HCT116 (cell line): ENCODE measurements at regions of chr17 and their contacts with region 1.

Region 1: GRCh38 chr17:61495145-61495857 is 43.1 kb downstream of the TBX4 start:
- DNase-seq: peak; percentile 93
- ATAC-seq: peak; percentile 90
- H3K4me3 ChIP-seq: peak overlapping the region; percentile 47 to 59
- H3K27ac ChIP-seq: peak overlapping the region; percentile 92
- H3K4me1 ChIP-seq: peaks cover 72 to 74% of the 10 kb centered on the region in 2 experiments
- H3K27me3 ChIP-seq: no peaks in the 10 kb centered on the region
- CTCF ChIP-seq: no peak
- POLR2A ChIP-seq: peak; percentile 76
- RAD21 ChIP-seq: no peak; the same call in 1 of the 2 replicates

Region 2: DNA sequence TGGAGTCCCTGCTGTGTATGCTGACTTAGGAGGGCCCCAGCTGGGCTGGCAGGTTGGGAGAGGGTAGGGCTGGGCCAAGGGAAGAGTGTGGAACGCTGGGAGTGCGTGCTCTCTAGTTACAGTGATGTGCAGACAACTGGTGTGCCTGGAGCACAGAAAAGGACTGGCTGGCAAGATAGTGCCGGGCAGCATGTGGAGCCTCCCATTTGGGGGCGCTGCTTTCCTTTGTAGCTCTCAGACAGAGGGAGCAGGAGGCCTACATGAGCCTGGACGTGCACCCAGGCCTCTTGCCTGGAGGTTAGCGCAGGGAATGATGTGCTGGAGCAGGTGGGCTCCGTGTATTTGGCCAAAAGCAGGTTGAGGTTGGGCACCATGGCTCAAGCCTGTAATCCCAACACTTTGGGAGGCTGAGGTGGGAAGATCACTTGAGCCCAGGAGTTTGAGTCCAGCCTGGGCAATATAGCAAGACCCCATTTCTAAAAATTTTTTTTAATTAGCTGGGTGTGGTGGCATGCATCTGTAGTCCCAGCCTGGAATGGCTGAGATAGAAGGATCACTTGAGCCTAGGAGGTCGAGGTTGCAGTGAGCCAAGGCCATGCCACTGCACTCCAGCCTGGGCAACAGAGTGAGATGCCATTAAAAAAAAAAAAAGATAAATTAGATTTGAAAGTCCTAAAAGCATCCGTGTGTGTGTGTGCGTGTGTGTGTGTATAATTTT is 69.1 kb before region 1 on chr17:
- CTCF ChIA-PET with region 1: no interaction called
- POLR2A ChIA-PET with region 1: no interaction called
- RAD21 ChIA-PET with region 1: interaction called in 1 of 2 experiments, 3 read pairs
- intact Hi-C with region 1: loop called (anchors 2 kb)
- DNase-seq: peak; percentile 63
- ATAC-seq: peak; percentile 72
- H3K4me3 ChIP-seq: no peak overlapping the region
- H3K27ac ChIP-seq: peak overlapping the region; percentile 89
- H3K4me1 ChIP-seq: peaks cover 37 to 42% of the 10 kb centered on the region in 2 experiments
- H3K27me3 ChIP-seq: no peaks in the 10 kb centered on the region
- CTCF ChIP-seq: peak; percentile 58 to 86 (median 64)
- POLR2A ChIP-seq: no peak
- RAD21 ChIP-seq: peak; percentile 92

Region 3: GRCh38 chr17:61467416-61468259 is 27.7 kb before region 1 on chr17:
- CTCF ChIA-PET with region 1: interaction called, 3 read pairs
- POLR2A ChIA-PET with region 1: interaction called, 23 read pairs
- RAD21 ChIA-PET with region 1: no interaction called
- intact Hi-C with region 1: no loop called
- DNase-seq: peak; percentile 59
- ATAC-seq: peak; percentile 90
- H3K4me3 ChIP-seq: no peak overlapping the region
- H3K27ac ChIP-seq: peak overlapping the region; percentile 23; the same call in 1 of the 2 replicates
- H3K4me1 ChIP-seq: peaks cover 18 to 27% of the 10 kb centered on the region in 2 experiments
- H3K27me3 ChIP-seq: no peaks in the 10 kb centered on the region
- CTCF ChIP-seq: no peak
- POLR2A ChIP-seq: no peak
- RAD21 ChIP-seq: no peak

Region 4: DNA sequence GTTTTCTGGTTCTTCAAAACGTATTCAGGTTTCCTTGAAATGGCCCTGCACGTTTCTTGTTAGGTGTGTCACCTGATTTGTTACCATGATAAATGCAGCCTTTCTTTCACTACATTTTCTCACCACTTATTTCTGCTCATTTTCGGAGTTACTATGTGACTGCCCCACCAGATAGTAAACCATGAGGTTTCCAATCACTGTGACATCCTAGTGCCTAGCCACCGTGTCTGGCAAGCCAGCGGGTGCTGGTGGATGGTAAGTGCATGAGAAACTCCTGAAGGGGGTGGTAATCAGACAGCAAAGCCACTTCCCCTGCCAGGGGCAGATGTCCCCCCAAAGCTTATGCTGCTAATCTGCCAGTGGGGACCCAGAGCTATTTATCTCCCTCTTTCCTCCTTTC is 22.1 kb before region 1 on chr17:
- CTCF ChIA-PET with region 1: interaction called, 3 read pairs
- POLR2A ChIA-PET with region 1: interaction called, 23 read pairs
- RAD21 ChIA-PET with region 1: no interaction called
- intact Hi-C with region 1: no loop called
- DNase-seq: no peak
- ATAC-seq: no peak
- H3K4me3 ChIP-seq: no peak overlapping the region
- H3K27ac ChIP-seq: no peak overlapping the region
- H3K4me1 ChIP-seq: peaks cover 9 to 29% of the 10 kb centered on the region in 2 experiments; a peak in 3 of 4 replicates
- H3K27me3 ChIP-seq: no peaks in the 10 kb centered on the region
- CTCF ChIP-seq: no peak
- POLR2A ChIP-seq: no peak
- RAD21 ChIP-seq: no peak

Region 5: GRCh38 chr17:61508912-61509311 is 13.6 kb after region 1 on chr17:
- CTCF ChIA-PET with region 1: interaction called, 4 read pairs
- POLR2A ChIA-PET with region 1: interaction called, 10 read pairs
- RAD21 ChIA-PET with region 1: no interaction called
- intact Hi-C with region 1: no loop called
- DNase-seq: no peak
- ATAC-seq: no peak
- H3K4me3 ChIP-seq: no peak overlapping the region
- H3K27ac ChIP-seq: no peak overlapping the region
- H3K4me1 ChIP-seq: peaks cover 18 to 32% of the 10 kb centered on the region in 2 experiments
- H3K27me3 ChIP-seq: no peaks in the 10 kb centered on the region
- CTCF ChIP-seq: no peak
- POLR2A ChIP-seq: no peak
- RAD21 ChIP-seq: no peak

Region 6: GRCh38 chr17:61568219-61569072 is 73.1 kb after region 1 on chr17:
- CTCF ChIA-PET with region 1: no interaction called
- POLR2A ChIA-PET with region 1: interaction called, 10 read pairs
- RAD21 ChIA-PET with region 1: no interaction called
- intact Hi-C with region 1: no loop called
- DNase-seq: peak; percentile 95
- ATAC-seq: peak; percentile 75
- H3K4me3 ChIP-seq: peak overlapping the region in 1 of 2 experiments; percentile 0; a peak in 2 of 4 replicates
- H3K27ac ChIP-seq: peak overlapping the region; percentile 96
- H3K4me1 ChIP-seq: peaks cover 36 to 48% of the 10 kb centered on the region in 2 experiments
- H3K27me3 ChIP-seq: no peaks in the 10 kb centered on the region
- CTCF ChIP-seq: no peak
- POLR2A ChIP-seq: no peak
- RAD21 ChIP-seq: peak; percentile 51

Region 7: GRCh38 chr17:61720016-61720795 is 224.9 kb after region 1 on chr17:
- CTCF ChIA-PET with region 1: no interaction called
- POLR2A ChIA-PET with region 1: no interaction called
- RAD21 ChIA-PET with region 1: no interaction called
- intact Hi-C with region 1: no loop called
- DNase-seq: no peak
- ATAC-seq: no peak
- H3K4me3 ChIP-seq: no peak overlapping the region
- H3K27ac ChIP-seq: no peak overlapping the region
- H3K4me1 ChIP-seq: no peaks in the 10 kb centered on the region
- H3K27me3 ChIP-seq: no peaks in the 10 kb centered on the region
- CTCF ChIP-seq: no peak
- POLR2A ChIP-seq: no peak
- RAD21 ChIP-seq: no peak